Activated CD4-positive, alpha-beta memory T cell treated with anti-CD3 and anti-CD28 coated beads for 36 hours (primary cell): ENCODE measurements at regions of chr5 and their contacts with region 1.

Region 1: DNA sequence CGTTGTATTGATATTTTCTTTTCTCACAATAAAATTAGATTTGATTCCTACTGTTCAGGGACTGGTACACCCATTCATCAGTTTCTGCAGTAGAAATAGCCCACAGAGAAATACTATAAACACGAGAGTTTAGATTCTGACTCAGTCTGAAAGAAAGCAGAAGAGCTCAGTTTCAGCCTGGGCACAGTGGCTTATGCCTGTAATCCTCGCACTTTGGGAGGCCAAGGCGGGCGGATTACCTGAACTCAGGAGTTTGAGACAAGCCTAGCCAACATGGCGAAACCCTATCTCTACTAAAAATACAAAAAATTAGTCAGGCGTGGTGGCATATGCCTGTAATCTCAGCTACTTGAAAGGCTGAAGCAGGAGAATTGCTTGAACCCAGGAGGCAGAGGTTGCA is 8.6 kb downstream of the ITK start:
- DNase-seq: peak; percentile 76
- H3K4me3 Mint-ChIP-seq: peak overlapping the region; percentile 99
- H3K27ac Mint-ChIP-seq: peak overlapping the region; percentile 100
- H3K4me1 Mint-ChIP-seq: peaks cover 75% of the 10 kb centered on the region
- H3K27me3 Mint-ChIP-seq: no peaks in the 10 kb centered on the region

Region 2: DNA sequence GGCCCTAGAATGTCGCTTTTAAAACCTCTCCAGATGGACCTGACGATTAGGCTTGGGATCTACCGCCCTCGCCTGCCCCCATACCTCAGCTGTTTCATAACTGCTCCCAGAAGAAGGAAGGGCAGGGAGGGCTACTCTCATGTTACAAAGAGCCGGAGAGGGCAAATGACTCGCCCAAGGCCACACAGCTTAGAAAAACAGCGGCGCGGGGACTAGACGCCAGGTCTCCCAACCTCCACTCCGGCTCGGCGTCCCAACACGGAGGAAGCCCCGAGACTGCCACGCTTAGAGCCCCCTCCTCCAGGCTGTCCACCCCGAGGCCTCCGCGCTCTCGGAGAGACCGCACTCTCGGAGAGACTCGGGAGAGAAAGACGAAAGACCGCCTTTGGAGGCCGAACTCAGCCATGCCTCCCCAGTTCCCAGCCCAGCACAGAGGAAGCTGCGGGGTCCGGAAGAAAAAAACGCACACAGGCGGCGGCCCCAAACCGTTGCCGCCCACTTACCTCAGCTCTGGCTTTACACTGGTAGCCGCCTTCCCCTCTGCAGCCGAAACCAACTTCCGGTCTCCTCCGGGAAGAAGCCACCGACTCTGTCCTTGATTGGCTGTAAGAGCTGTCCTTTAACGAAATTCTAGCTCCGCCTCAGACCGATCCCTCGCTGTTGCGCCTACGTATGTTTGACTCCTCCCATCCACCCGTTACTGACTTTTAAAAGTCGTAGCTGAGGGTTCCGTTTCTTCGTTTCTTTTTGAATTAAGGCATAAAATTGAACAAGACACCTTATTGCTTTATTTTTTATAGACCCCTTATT is 46.7 kb before region 1 on chr5 and contains the start of gene MED7:
- CTCF ChIA-PET with region 1: interaction called, 32 read pairs
- POLR2A ChIA-PET with region 1: interaction called, 17 read pairs
- intact Hi-C with region 1: no loop called
- DNase-seq: peak; percentile 96
- H3K4me3 Mint-ChIP-seq: peak within 1 kb of the TSS; percentile 96
- H3K27ac Mint-ChIP-seq: peak within 1 kb of the TSS; percentile 99
- H3K4me1 Mint-ChIP-seq: peaks cover 49% of the 10 kb centered on the region
- H3K27me3 Mint-ChIP-seq: no peaks in the 10 kb centered on the region
- total RNA-seq, gene MED7: 17.2 to 19.2 TPM

Region 3: GRCh38 chr5:157159209-157159751 is 29.9 kb before region 1 on chr5:
- CTCF ChIA-PET with region 1: no interaction called
- POLR2A ChIA-PET with region 1: interaction called, 76 read pairs
- intact Hi-C with region 1: loop called (anchors 5 kb)
- DNase-seq: peak; percentile 70
- H3K4me3 Mint-ChIP-seq: peak overlapping the region; percentile 72
- H3K27ac Mint-ChIP-seq: peak overlapping the region; percentile 98
- H3K4me1 Mint-ChIP-seq: peaks cover 82% of the 10 kb centered on the region
- H3K27me3 Mint-ChIP-seq: no peaks in the 10 kb centered on the region

Region 4: GRCh38 chr5:157167214-157167621 is 22.0 kb before region 1 on chr5:
- CTCF ChIA-PET with region 1: interaction called, 20 read pairs
- POLR2A ChIA-PET with region 1: interaction called, 82 read pairs
- intact Hi-C with region 1: no loop called
- DNase-seq: peak; percentile 42
- H3K4me3 Mint-ChIP-seq: peak overlapping the region; percentile 47
- H3K27ac Mint-ChIP-seq: peak overlapping the region; percentile 91
- H3K4me1 Mint-ChIP-seq: peaks cover 88% of the 10 kb centered on the region
- H3K27me3 Mint-ChIP-seq: no peaks in the 10 kb centered on the region

Region 5: DNA sequence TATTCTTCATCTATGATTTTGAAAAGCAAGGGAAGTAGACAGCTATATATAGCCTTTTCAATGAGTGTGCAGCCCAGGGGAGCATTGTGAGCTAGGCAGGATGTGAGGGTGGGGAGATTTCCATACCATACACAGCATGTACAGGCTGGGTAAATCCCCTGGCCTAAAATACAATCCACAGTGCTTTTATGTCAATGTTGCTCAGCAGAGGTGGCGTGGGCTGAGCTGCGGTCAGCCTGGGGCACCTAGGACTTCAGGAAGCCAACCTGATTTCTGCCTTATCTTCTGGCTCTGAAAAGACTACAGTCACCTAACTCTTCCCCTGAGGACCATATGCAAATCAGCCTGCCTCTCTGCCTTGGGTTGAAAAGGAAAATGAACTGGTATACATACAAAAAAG is 16.8 kb before region 1 on chr5:
- CTCF ChIA-PET with region 1: interaction called, 20 read pairs
- POLR2A ChIA-PET with region 1: interaction called, 82 read pairs
- intact Hi-C with region 1: no loop called
- DNase-seq: peak; percentile 96
- H3K4me3 Mint-ChIP-seq: peak overlapping the region; percentile 68
- H3K27ac Mint-ChIP-seq: peak overlapping the region; percentile 95
- H3K4me1 Mint-ChIP-seq: peaks cover 83% of the 10 kb centered on the region
- H3K27me3 Mint-ChIP-seq: no peaks in the 10 kb centered on the region

Region 6: GRCh38 chr5:157204765-157205164 is 15.5 kb after region 1 on chr5:
- CTCF ChIA-PET with region 1: interaction called, 5 read pairs
- POLR2A ChIA-PET with region 1: interaction called, 42 read pairs
- intact Hi-C with region 1: no loop called
- DNase-seq: no peak
- H3K4me3 Mint-ChIP-seq: peak overlapping the region; percentile 43
- H3K27ac Mint-ChIP-seq: peak overlapping the region; percentile 95
- H3K4me1 Mint-ChIP-seq: peaks cover 88% of the 10 kb centered on the region
- H3K27me3 Mint-ChIP-seq: no peaks in the 10 kb centered on the region

Region 7: GRCh38 chr5:157253547-157253946 is 64.3 kb after region 1 on chr5:
- CTCF ChIA-PET with region 1: interaction called, 6 read pairs
- POLR2A ChIA-PET with region 1: interaction called, 5 read pairs
- intact Hi-C with region 1: loop called (anchors 2 kb)
- DNase-seq: no peak
- H3K4me3 Mint-ChIP-seq: peak overlapping the region; percentile 39
- H3K27ac Mint-ChIP-seq: peak overlapping the region; percentile 96
- H3K4me1 Mint-ChIP-seq: peaks cover 92% of the 10 kb centered on the region
- H3K27me3 Mint-ChIP-seq: no peaks in the 10 kb centered on the region